ENCODE measurements at regions of chrX and their contacts with region 1.

Region 1: DNA sequence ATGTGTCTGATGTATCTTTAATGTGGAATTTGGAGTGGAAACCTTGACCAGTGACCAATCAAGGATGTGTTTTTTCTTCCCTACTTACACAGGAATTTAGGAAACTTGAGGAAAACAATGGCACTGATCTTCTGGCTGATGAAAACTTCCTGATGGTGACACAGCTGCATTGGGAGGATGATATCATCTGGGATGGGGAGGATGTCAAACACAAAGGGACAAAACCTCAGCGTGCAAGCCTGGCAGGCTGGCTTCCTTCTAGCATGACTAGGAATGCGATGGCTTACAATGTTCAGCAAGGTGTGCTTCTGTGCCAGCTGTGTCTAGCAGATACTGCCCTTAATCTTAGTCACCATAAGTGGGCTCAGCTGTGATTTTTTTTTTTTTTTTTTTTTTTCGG is 12.6 kb downstream of the TAF1 start:
- DNase-seq: no peak
- H3K4me3 ChIP-seq: no peak overlapping the region
- H3K27ac ChIP-seq: no peak overlapping the region
- H3K4me1 ChIP-seq: no peaks in the 10 kb centered on the region
- H3K27me3 ChIP-seq: no peaks in the 10 kb centered on the region
- CTCF ChIP-seq: no peak

Region 2: DNA sequence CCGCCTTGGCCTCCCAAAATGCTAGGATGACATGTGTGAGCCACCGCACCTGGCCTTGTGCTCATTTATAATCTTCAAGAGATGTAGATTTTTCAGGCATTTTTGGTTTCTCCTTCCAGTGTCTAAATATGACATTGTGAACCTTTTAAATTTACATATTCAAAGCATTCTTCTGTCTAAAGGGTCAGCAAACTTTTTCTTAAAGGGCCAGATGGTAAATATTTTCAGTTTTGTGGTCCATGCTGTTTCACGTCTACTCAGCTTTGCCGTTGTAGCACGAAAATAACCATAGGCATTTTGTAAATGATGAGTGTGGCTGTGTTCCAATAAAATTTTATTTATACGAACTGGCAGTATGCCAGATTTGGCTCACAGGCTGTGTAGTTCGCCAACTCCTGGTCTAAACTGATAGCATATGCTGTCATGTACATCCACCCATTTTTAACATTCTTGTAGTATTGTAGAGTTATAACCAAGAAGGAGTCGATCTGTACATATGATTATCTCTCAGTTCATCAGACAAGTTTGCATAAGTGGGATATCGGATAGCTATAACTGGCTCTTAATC is 186.8 kb after region 1 on chrX:
- CTCF ChIA-PET with region 1: no interaction called
- dilution Hi-C with region 1: no loop called
- in situ Hi-C with region 1: loop called (anchors 25 kb)
- intact Hi-C with region 1: no loop called
- DNase-seq: no peak
- H3K4me3 ChIP-seq: no peak overlapping the region
- H3K27ac ChIP-seq: no peak overlapping the region
- H3K4me1 ChIP-seq: no peaks in the 10 kb centered on the region
- H3K27me3 ChIP-seq: no peaks in the 10 kb centered on the region
- CTCF ChIP-seq: no peak

Measured in mammary epithelial cell (primary cell).